Mammary epithelial cell (primary cell): ENCODE measurements at regions of chr5 and their contacts with region 1.

Region 1: GRCh38 chr5:110134963-110135935 is 445.5 kb downstream of the MAN2A1 start:
- DNase-seq: no peak
- H3K4me3 ChIP-seq: no peak overlapping the region
- H3K27ac ChIP-seq: no peak overlapping the region
- H3K4me1 ChIP-seq: no peaks in the 10 kb centered on the region
- H3K27me3 ChIP-seq: no peaks in the 10 kb centered on the region
- CTCF ChIP-seq: no peak

Region 2: DNA sequence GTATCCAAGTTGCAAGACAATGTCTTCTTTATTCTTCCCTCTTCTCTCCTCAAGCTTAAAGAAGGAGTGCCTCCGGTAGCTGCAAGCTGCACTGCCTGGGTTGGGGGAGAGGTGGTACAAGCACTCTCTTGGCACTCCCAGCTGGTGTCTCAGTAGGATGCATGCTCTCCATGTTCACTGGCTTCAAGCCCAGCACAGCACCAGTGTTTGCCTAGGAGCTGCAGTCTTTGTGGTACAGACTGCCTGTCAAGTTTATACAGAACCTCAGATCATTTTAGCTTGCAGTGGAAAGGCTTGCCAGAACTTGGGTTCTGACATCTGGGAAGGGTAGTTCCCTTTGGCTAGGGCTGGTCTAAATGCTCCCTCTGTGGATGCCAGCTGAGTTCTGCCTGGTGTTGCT is 60.0 kb after region 1 on chr5:
- CTCF ChIA-PET with region 1: no interaction called
- dilution Hi-C with region 1: loop called (anchors 5 kb)
- in situ Hi-C with region 1: no loop called
- intact Hi-C with region 1: no loop called
- DNase-seq: no peak
- H3K4me3 ChIP-seq: no peak overlapping the region
- H3K27ac ChIP-seq: no peak overlapping the region
- H3K4me1 ChIP-seq: no peaks in the 10 kb centered on the region
- H3K27me3 ChIP-seq: no peaks in the 10 kb centered on the region
- CTCF ChIP-seq: no peak

Region 3: DNA sequence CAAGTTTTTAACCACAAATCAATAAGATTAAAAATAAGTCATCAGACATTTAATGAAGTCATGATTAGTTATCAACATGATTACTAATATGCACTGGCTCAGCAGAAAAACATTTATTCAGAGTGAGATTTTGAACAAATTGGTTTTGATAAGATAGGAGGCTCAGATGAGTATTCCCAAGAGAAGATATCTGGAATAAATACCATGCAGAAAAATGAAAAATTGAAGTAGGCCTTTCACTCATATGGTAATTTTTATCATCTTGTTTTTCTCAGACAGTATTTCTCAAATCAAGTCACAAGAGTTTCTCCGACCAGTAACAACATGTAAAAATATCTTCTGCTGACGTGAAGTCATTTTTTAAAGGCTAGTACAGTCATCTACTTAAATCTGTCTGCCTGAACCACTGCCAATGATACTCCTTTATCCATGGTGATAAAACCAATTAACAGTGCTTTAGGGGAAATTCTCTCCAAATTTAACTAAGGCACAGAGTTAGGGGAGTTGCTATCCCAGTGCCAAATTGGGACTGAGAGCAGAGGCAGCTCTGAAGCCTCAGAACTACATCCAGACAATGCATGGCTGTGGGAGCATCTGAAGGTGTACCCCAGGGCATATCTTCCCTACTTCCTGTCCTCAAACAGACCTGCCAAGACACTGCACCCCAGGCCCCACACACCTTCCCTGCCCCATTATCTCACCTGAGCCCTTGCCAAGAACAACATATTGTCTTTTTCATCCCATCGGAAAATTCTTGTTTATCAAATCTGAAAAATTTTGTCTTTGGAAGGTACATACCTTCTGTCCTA is 830.7 kb after region 1 on chr5:
- CTCF ChIA-PET with region 1: no interaction called
- dilution Hi-C with region 1: no loop called
- in situ Hi-C with region 1: no loop called
- intact Hi-C with region 1: no loop called
- DNase-seq: peak; percentile 81
- H3K4me3 ChIP-seq: no peak overlapping the region
- H3K27ac ChIP-seq: peak overlapping the region; percentile 52
- H3K4me1 ChIP-seq: peaks cover 21% of the 10 kb centered on the region
- H3K27me3 ChIP-seq: no peaks in the 10 kb centered on the region
- CTCF ChIP-seq: no peak